GM12878 (cell line): ENCODE measurements at regions of chr10 and their contacts with region 1.

Region 1: GRCh38 chr10:9028231-9028630 is 973.7 kb downstream of the GATA3 start:
- DNase-seq: no peak
- ATAC-seq: no peak
- H3K4me3 ChIP-seq: no peak overlapping the region
- H3K27ac ChIP-seq: no peak overlapping the region
- H3K4me1 ChIP-seq: no peaks in the 10 kb centered on the region
- H3K27me3 ChIP-seq: no peaks in the 10 kb centered on the region
- CTCF ChIP-seq: no peak
- EP300 ChIP-seq: no peak
- POLR2A ChIP-seq: no peak
- RAD21 ChIP-seq: no peak

Region 2: DNA sequence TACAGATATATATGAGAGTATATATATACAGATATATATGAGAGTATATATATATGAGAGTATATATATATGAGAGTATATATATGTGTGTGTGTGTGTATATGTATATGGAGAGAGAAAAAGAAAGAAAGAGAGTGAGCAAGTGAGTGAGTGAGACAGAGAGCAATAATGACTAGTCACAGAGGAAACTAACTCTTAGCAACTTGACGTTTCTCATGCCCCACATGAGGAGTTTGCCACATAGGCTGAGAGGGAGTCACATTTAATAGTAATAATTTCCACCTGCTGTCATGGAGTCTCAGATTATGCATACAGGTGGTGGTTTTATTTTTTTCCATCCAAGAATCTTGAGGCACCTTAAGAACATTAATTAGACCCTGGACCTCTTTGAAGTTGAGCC is 773.9 kb before region 1 on chr10:
- CTCF ChIA-PET with region 1: no interaction called
- POLR2A ChIA-PET with region 1: no interaction called
- RAD21 ChIA-PET with region 1: no interaction called
- SMC1A ChIA-PET with region 1: no interaction called
- in situ Hi-C with region 1: no loop called
- intact Hi-C with region 1: no loop called
- DNase-seq: no peak
- ATAC-seq: no peak
- H3K4me3 ChIP-seq: no peak overlapping the region
- H3K27ac ChIP-seq: no peak overlapping the region
- H3K4me1 ChIP-seq: no peaks in the 10 kb centered on the region
- H3K27me3 ChIP-seq: no peaks in the 10 kb centered on the region
- CTCF ChIP-seq: no peak
- EP300 ChIP-seq: no peak
- POLR2A ChIP-seq: no peak
- RAD21 ChIP-seq: no peak

Region 3: GRCh38 chr10:9016930-9017329 is 11.3 kb before region 1 on chr10:
- CTCF ChIA-PET with region 1: no interaction called
- POLR2A ChIA-PET with region 1: no interaction called
- RAD21 ChIA-PET with region 1: no interaction called
- SMC1A ChIA-PET with region 1: no interaction called
- in situ Hi-C with region 1: no loop called
- intact Hi-C with region 1: loop called (anchors 1 kb)
- DNase-seq: no peak
- ATAC-seq: no peak
- H3K4me3 ChIP-seq: no peak overlapping the region
- H3K27ac ChIP-seq: no peak overlapping the region
- H3K4me1 ChIP-seq: no peaks in the 10 kb centered on the region
- H3K27me3 ChIP-seq: no peaks in the 10 kb centered on the region
- CTCF ChIP-seq: no peak
- EP300 ChIP-seq: no peak
- POLR2A ChIP-seq: no peak
- RAD21 ChIP-seq: no peak